ENCODE measurements at regions of chr1 and their contacts with region 1.

Region 1: GRCh38 chr1:119732465-119733168 is 20.9 kb downstream of the PHGDH start:
- DNase-seq: no peak
- H3K4me3 ChIP-seq: no peak overlapping the region
- H3K27ac ChIP-seq: no peak overlapping the region
- H3K4me1 ChIP-seq: peaks cover 10% of the 10 kb centered on the region
- H3K27me3 ChIP-seq: no peaks in the 10 kb centered on the region
- CTCF ChIP-seq: no peak
- POLR2A ChIP-seq: no peak

Region 2: GRCh38 chr1:119743781-119744597 is 11.4 kb after region 1 on chr1:
- CTCF ChIA-PET with region 1: interaction called, 21 read pairs
- POLR2A ChIA-PET with region 1: no interaction called
- dilution Hi-C with region 1: no loop called
- intact Hi-C with region 1: no loop called
- DNase-seq: peak; percentile 60
- H3K4me3 ChIP-seq: no peak overlapping the region
- H3K27ac ChIP-seq: no peak overlapping the region
- H3K4me1 ChIP-seq: no peaks in the 10 kb centered on the region
- H3K27me3 ChIP-seq: peaks cover 0 to 2% of the 10 kb centered on the region in 2 experiments
- CTCF ChIP-seq: peak; percentile 83 to 85
- POLR2A ChIP-seq: no peak